Mucosa of descending colon (tissue), 3 donors: ENCODE measurements at regions of chr3 and their contacts with region 1.

Region 1: DNA sequence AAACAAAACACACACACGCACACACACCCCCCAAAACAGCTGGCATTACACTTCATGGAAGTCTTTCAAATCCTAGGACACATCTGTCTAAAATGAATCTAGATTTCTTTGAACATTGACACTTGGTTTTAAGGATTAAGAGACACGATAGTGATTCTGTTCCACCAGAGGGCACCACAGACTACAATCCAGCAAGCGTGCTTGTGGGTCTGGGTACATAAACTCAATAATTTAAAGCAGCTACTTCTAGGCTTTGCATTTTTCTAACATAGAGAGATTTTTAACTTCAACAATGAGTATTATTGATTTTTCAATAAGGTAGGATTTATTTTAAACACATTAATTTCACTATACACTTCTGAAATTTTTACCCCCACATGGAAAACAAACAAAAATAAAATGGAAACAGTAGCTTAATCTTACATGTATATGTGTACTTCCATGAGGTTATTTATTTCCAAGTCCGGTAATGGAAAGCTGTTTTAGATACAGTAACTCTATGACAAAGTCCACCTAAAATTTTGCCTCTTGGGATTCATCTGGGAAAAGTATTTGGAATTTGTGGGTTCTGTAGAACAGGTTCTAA is 564.0 kb upstream of the TGFBR2 start:
- DNase-seq: peak in 2 of 3 donors; percentile 35 to 86
- ATAC-seq: peak; percentile 71
- H3K4me3 ChIP-seq: no peak overlapping the region
- H3K4me1 ChIP-seq: no peaks in the 10 kb centered on the region
- CTCF ChIP-seq: peak; percentile 41

Region 2: GRCh38 chr3:30112902-30113484 is 70.6 kb after region 1 on chr3:
- intact Hi-C with region 1: loop called in 1 of 2 experiments (anchors 5 kb)
- DNase-seq: no peak
- ATAC-seq: peak; percentile 32
- H3K4me3 ChIP-seq: no peak overlapping the region
- H3K4me1 ChIP-seq: peaks cover 6% of the 10 kb centered on the region
- CTCF ChIP-seq: peak; percentile 19